T-cell (primary cell): ENCODE measurements at regions of chr10 and their contacts with region 1.

Region 1: DNA sequence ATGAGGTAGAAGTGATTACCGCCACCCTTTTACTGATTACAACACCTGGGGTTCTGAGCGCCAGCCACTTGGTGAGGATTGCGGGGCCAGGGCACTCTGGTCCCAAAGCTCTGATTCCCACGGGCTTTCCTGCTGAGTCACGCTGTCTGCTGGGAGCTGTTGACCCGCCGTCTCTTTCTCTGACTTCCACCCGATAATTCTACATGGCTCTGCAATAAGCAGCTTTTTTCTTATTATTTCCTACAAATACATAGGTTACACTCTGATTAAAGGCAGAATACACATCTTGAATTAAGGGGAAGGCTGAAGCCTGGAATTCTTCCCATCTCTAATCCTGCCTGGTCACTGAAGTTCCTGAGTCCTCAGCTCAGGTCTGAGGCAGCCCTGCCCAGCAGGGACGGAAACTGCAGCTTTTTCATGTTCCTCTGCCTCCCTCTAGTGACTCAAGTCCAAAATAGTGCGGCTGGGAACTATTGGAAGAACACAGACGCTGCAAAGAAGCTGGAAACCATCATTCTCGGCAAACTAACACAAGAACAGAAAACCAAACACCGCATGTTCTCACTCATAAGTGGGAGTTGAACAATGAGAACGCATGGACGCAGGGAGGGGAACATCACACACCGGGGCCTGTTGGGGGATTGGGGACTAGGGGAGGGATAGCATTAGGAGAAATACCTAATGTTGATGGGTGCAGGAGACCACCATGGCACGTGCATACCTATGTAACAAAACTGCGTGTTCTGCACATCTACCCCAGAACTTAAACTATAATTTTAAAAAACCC is 178.3 kb downstream of the PRKCQ start:
- DNase-seq: peak; percentile 13 to 83 (median 44)
- ATAC-seq: peak; percentile 85 to 93 (median 88)
- H3K4me3 ChIP-seq: no peak overlapping the region
- H3K4me3 Mint-ChIP-seq: peak overlapping the region; percentile 1 to 25 (median 17)
- H3K27ac ChIP-seq: no peak overlapping the region
- H3K27ac Mint-ChIP-seq: peak overlapping the region; percentile 47 to 53
- H3K4me1 ChIP-seq: peaks cover 3 to 7% of the 10 kb centered on the region in 2 experiments
- H3K4me1 Mint-ChIP-seq: peaks cover 21 to 34% (median 29%) of the 10 kb centered on the region in 3 donors
- H3K27me3 ChIP-seq: peaks cover 0 to 3% of the 10 kb centered on the region in 2 experiments
- H3K27me3 Mint-ChIP-seq: peaks cover 0 to 4% of the 10 kb centered on the region in 2 donors

Region 2: DNA sequence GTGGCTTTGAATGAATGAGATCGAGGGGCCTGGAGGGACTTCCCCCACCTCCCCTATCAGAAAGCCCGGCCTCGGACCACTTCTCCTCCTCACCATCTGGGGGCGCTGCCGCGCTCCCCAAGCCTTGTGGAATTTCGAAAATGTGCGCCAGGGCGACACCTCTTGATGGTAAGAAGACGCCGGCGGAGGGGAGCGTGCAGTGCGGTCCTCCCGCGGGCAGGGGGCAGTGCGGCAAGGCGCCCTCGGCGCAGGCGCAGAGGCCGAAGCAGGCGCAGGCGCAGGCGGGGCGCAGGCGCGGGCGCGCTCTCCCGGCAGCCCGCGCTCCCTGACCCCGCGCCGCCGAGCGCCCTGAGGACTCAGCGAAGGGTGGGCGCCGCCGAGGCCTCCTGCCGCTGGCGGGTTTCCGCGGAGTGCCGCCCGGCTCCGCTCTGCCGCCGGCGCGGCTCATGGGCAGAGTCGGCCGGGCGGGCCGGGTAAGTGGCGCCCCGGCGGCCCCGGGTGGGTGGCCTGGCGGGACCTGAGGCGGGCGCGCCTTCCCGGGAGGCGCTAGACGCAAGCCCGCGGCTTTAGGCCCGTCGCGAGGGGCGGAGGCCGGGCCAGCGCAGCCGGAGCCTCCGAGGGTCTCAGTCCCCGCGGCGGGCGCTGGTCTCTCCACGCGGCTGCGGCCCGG is 312.9 kb before region 1 on chr10 and contains the start of gene RBM17:
- CTCF ChIA-PET with region 1: interaction called, 3 to 11 read pairs
- POLR2A ChIA-PET with region 1: interaction called, 3 read pairs
- DNase-seq: peak; percentile 91 to 100 (median 96)
- ATAC-seq: peak; percentile 84 to 92 (median 85)
- H3K4me3 ChIP-seq: peak within 1 kb of the TSS; percentile 68 to 83
- H3K4me3 Mint-ChIP-seq: peak within 1 kb of the TSS; percentile 87 to 92 (median 91)
- H3K27ac ChIP-seq: no peak within 1 kb of the TSS
- H3K27ac Mint-ChIP-seq: peak within 1 kb of the TSS; percentile 77 to 85
- H3K4me1 ChIP-seq: peaks cover 28 to 46% of the 10 kb centered on the region in 2 experiments
- H3K4me1 Mint-ChIP-seq: peaks cover 65 to 73% (median 72%) of the 10 kb centered on the region in 3 donors
- H3K27me3 ChIP-seq: peaks cover 0 to 4% of the 10 kb centered on the region in 2 experiments
- H3K27me3 Mint-ChIP-seq: no peaks in the 10 kb centered on the region
- total RNA-seq, gene RBM17: 119 to 148 (median 127) TPM

Region 3: DNA sequence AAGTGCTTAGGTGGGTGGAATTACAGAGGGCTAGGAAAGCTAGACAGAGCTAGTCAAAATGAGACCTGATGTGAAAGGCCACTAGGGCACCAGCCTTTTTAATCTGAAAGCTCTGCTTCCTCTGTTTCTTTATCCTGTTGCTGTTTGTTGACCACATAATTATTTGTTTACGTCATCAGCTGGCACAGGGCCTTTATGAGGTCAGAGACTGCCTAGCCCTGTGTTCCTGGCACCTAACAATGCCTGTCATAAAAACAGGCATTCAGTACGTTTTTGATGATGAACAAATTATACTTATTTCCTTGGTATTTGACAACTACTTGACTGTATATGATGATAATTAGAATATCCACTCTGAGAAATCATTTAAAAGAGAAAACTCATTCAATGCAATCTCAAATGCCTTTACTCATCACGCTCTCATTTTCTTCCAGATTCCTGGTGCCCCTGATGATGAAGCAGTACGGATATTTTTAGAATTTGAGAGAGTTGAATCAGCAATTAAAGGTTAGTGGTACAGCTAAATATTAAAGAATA is 286.9 kb before region 1 on chr10:
- CTCF ChIA-PET with region 1: interaction called, 10 to 12 read pairs
- POLR2A ChIA-PET with region 1: no interaction called
- DNase-seq: no peak
- ATAC-seq: no peak
- H3K4me3 ChIP-seq: no peak overlapping the region
- H3K4me3 Mint-ChIP-seq: no peak overlapping the region
- H3K27ac ChIP-seq: no peak overlapping the region
- H3K27ac Mint-ChIP-seq: peak overlapping the region; percentile 23 to 78
- H3K4me1 ChIP-seq: no peaks in the 10 kb centered on the region
- H3K4me1 Mint-ChIP-seq: peaks cover under 1 to 17% (median 11%) of the 10 kb centered on the region in 3 donors
- H3K27me3 ChIP-seq: no peaks in the 10 kb centered on the region
- H3K27me3 Mint-ChIP-seq: no peaks in the 10 kb centered on the region

Region 4: DNA sequence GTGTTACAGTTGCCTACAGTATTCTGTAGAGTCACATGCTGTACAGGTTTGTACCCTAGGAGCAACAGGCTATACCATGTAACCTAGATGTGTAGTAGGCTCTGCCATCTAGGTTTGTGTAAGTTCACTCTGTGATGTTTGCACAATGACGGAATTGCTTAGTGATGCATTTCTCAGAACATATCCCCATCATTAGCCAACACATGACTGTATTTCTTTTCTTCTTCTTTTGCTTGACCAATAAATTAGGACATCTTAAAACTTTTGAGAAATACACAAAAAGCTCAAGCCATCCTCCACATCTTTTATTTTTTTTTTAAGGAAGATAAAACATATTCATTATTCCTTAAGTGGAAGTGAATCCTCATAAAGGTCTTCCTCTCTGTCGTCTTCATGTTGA is 204.4 kb before region 1 on chr10:
- CTCF ChIA-PET with region 1: interaction called, 10 to 42 read pairs
- POLR2A ChIA-PET with region 1: interaction called in 1 of 2 experiments, 10 read pairs
- DNase-seq: no peak
- ATAC-seq: no peak
- H3K4me3 ChIP-seq: no peak overlapping the region
- H3K4me3 Mint-ChIP-seq: no peak overlapping the region
- H3K27ac ChIP-seq: no peak overlapping the region
- H3K27ac Mint-ChIP-seq: peak overlapping the region in 1 of 2 donors; percentile 34
- H3K4me1 ChIP-seq: peaks cover 16 to 17% of the 10 kb centered on the region in 2 experiments
- H3K4me1 Mint-ChIP-seq: peaks cover 18 to 30% (median 22%) of the 10 kb centered on the region in 3 donors
- H3K27me3 ChIP-seq: no peaks in the 10 kb centered on the region
- H3K27me3 Mint-ChIP-seq: no peaks in the 10 kb centered on the region

Region 5: GRCh38 chr10:6348096-6348874 is 53.5 kb before region 1 on chr10:
- CTCF ChIA-PET with region 1: interaction called, 3 to 23 read pairs
- POLR2A ChIA-PET with region 1: interaction called in 1 of 2 experiments, 3 read pairs
- DNase-seq: peak; percentile 53 to 95 (median 85)
- ATAC-seq: peak; percentile 91 to 94 (median 92)
- H3K4me3 ChIP-seq: peak overlapping the region in 1 of 2 donors; percentile 27
- H3K4me3 Mint-ChIP-seq: peak overlapping the region; percentile 74 to 76 (median 75)
- H3K27ac ChIP-seq: peak overlapping the region; percentile 89
- H3K27ac Mint-ChIP-seq: peak overlapping the region; percentile 97
- H3K4me1 ChIP-seq: peaks cover 21 to 27% of the 10 kb centered on the region in 2 experiments
- H3K4me1 Mint-ChIP-seq: peaks cover 62 to 64% (median 62%) of the 10 kb centered on the region in 3 donors
- H3K27me3 ChIP-seq: no peaks in the 10 kb centered on the region
- H3K27me3 Mint-ChIP-seq: no peaks in the 10 kb centered on the region